Naive thymus-derived CD8-positive, alpha-beta T cell (primary cell): ENCODE measurements at regions of chr4 and their contacts with region 1.

Region 1: GRCh38 chr4:77075869-77076799 is at the start of gene CCNI:
- DNase-seq: peak; percentile 86 to 100 (median 94)
- ATAC-seq: peak; percentile 63 to 67
- H3K4me3 Mint-ChIP-seq: peak within 1 kb of the TSS in 7 of 10 donors; percentile 93 to 100 (median 99)
- H3K27ac Mint-ChIP-seq: peak within 1 kb of the TSS in 6 of 10 donors; percentile 100
- H3K4me1 Mint-ChIP-seq: peaks cover 26 to 47% (median 41%) of the 10 kb centered on the region in 4 donors
- H3K27me3 Mint-ChIP-seq: peaks cover 0 to 9% (median 0%) of the 10 kb centered on the region in 5 donors
- polyA plus RNA-seq, gene CCNI: 304 to 350 (median 348) TPM

Region 2: DNA sequence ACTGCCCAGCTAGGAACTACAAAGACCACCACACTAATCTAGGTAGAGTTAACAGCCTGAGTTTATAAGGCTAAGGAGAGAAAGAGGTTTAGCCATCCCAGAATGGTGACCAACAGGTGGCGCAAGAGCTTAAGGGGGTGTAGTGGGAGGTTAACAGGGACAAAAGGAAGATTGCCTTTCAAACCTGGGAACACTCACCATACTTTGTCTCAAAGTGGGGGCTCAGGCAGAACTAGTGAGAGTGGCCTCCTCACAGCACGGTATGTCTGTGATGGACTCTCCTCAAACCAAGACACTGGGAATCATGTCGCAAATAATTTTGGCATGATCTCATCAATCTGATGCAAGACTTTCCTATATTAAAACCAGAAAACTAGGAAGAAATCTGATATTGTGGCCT is 23.8 kb before region 1 on chr4:
- POLR2A ChIA-PET with region 1: interaction called, 12 read pairs
- DNase-seq: peak in 9 of 10 donors; percentile 35 to 81 (median 48)
- ATAC-seq: peak; percentile 56 to 75
- H3K4me3 Mint-ChIP-seq: peak overlapping the region in 1 of 10 donors; percentile 34
- H3K27ac Mint-ChIP-seq: peak overlapping the region in 8 of 10 donors; percentile 29 to 71 (median 56)
- H3K4me1 Mint-ChIP-seq: peaks cover 0 to 11% (median 4%) of the 10 kb centered on the region in 4 donors
- H3K27me3 Mint-ChIP-seq: no peaks in the 10 kb centered on the region

Region 3: DNA sequence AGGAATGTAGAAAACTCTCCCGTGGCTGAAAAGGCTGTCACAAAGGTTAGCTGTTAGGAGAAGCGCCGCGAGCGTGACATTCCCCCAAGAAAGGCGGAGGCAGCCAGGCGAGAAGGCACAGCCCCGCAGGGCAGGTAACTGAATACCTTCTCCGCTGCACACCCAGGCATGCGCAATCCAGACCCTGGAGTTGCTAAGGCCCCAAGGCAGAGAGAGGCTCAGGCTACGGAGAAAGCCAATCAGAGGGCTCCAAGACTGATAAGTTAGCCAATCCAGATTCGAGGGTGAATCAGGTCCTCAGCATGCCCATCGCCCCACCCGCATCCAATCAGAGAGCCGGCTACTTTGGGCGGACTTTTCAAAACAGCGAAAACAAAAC is 80.4 kb after region 1 on chr4:
- POLR2A ChIA-PET with region 1: interaction called, 44 read pairs
- DNase-seq: peak in 9 of 10 donors; percentile 78 to 100 (median 98)
- ATAC-seq: peak; percentile 92 to 94
- H3K4me3 Mint-ChIP-seq: peak overlapping the region; percentile 95 to 100 (median 98)
- H3K27ac Mint-ChIP-seq: peak overlapping the region; percentile 96 to 100 (median 98)
- H3K4me1 Mint-ChIP-seq: peaks cover 13 to 71% (median 31%) of the 10 kb centered on the region in 4 donors
- H3K27me3 Mint-ChIP-seq: peaks cover 0 to 5% (median 0%) of the 10 kb centered on the region in 5 donors